GM12878 (cell line): ENCODE measurements at regions of chr11 and their contacts with region 1.

Region 1: DNA sequence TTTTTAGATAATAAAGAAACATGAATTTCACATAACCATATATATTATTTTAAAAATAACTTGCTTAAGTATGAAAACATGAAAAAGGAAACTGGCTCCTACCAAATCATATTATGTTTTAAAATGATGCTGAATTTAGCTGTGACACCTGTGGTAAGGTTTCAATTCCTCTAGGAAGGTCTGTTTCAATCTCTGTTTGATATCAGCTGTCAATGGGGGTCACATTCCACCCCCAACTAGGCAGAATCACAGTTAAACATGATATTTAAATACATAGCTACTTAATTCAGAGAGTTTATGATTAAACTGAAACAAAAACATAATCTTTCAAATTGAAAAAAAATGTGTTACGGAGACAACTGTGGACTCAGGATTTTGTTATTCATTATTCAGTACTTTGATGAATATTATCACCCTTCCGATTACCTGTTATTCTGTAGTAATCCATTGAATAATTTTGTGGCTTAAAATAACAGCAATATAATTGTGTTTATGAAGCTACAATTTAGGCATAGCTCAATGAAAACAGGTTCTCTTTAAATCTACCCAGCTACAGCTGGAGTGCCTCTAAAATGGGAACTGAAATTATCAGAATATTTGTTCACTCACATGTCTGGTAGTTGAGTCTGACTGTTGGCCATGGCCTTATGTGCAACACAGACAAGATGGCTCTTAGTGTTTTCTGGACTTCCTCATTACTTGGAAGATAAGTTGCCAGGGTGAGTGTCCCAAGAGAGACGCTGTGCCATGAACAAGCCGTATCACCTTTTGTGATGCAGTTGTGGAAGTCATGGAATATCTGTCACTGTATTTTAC is 244.6 kb upstream of the ANO3 start:
- DNase-seq: peak; percentile 56
- ATAC-seq: peak; percentile 99
- H3K4me3 ChIP-seq: no peak overlapping the region
- H3K27ac ChIP-seq: peak overlapping the region; percentile 95
- H3K4me1 ChIP-seq: peaks cover 23% of the 10 kb centered on the region
- H3K27me3 ChIP-seq: no peaks in the 10 kb centered on the region
- CTCF ChIP-seq: no peak
- EP300 ChIP-seq: peak; percentile 51 to 68
- POLR2A ChIP-seq: 0 out of 2 replicates have a peak, but pooled peaks have one; percentile 19
- RAD21 ChIP-seq: no peak

Region 2: DNA sequence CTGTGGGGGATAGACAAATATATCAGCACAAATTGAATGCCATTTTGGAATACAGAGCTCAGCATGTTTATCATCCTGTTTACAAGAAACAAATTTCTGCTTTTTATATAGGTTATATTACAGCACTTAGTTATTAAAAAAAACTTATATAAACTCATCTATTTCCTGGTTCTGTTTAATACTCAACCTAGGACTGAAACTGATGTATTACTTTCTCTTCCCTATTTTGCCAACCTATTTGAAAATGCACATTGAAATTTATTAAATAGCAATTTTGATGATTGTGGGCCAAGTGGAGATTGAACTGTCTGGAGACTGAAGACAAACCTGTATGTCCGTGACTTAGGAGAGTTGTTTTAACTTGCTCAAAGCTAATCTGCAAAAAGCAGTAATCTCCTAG is 43.7 kb before region 1 on chr11:
- CTCF ChIA-PET with region 1: no interaction called
- POLR2A ChIA-PET with region 1: no interaction called
- RAD21 ChIA-PET with region 1: no interaction called
- SMC1A ChIA-PET with region 1: interaction called, 3 read pairs
- in situ Hi-C with region 1: no loop called
- intact Hi-C with region 1: loop called (anchors 1 kb)
- DNase-seq: no peak
- ATAC-seq: peak; percentile 84
- H3K4me3 ChIP-seq: no peak overlapping the region
- H3K27ac ChIP-seq: no peak overlapping the region
- H3K4me1 ChIP-seq: no peaks in the 10 kb centered on the region
- H3K27me3 ChIP-seq: no peaks in the 10 kb centered on the region
- CTCF ChIP-seq: no peak
- EP300 ChIP-seq: no peak
- POLR2A ChIP-seq: no peak
- RAD21 ChIP-seq: no peak

Region 3: GRCh38 chr11:26063915-26064314 is 23.4 kb before region 1 on chr11:
- CTCF ChIA-PET with region 1: interaction called, 4 read pairs
- POLR2A ChIA-PET with region 1: no interaction called
- RAD21 ChIA-PET with region 1: no interaction called
- SMC1A ChIA-PET with region 1: interaction called, 11 read pairs
- in situ Hi-C with region 1: no loop called
- intact Hi-C with region 1: no loop called
- DNase-seq: no peak
- ATAC-seq: no peak
- H3K4me3 ChIP-seq: no peak overlapping the region
- H3K27ac ChIP-seq: no peak overlapping the region
- H3K4me1 ChIP-seq: peaks cover 6% of the 10 kb centered on the region
- H3K27me3 ChIP-seq: no peaks in the 10 kb centered on the region
- CTCF ChIP-seq: no peak
- EP300 ChIP-seq: no peak
- POLR2A ChIP-seq: no peak
- RAD21 ChIP-seq: no peak

Region 4: GRCh38 chr11:26073646-26074045 is 13.7 kb before region 1 on chr11:
- CTCF ChIA-PET with region 1: no interaction called
- POLR2A ChIA-PET with region 1: no interaction called
- RAD21 ChIA-PET with region 1: no interaction called
- SMC1A ChIA-PET with region 1: interaction called, 10 read pairs
- in situ Hi-C with region 1: no loop called
- intact Hi-C with region 1: no loop called
- DNase-seq: no peak
- ATAC-seq: no peak
- H3K4me3 ChIP-seq: no peak overlapping the region
- H3K27ac ChIP-seq: no peak overlapping the region
- H3K4me1 ChIP-seq: no peaks in the 10 kb centered on the region
- H3K27me3 ChIP-seq: no peaks in the 10 kb centered on the region
- CTCF ChIP-seq: no peak
- EP300 ChIP-seq: no peak
- POLR2A ChIP-seq: no peak
- RAD21 ChIP-seq: no peak